Lower leg skin (tissue), 4 donors: ENCODE measurements at regions of chr6 and their contacts with region 1.

Region 1: DNA sequence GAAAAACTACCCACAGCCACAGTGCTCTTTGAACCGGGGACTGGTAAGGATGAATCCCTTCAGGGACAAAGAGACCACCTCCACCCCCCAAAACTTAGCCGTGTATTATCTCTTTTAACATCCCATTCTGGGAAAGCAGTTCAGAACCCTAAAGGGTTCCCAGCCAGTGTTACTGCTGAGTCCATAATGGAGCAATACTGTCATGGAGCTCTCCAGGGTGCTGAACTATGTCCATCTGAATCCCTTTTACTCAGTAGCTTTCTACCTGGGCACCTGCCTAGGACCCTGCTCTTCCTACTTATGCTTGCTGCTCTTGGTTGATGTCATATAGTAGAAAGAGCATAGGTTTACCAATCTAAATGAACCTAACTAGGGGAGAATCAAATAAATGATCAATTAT is 22.3 kb upstream of the SAYSD1 start:
- DNase-seq: no peak
- H3K4me3 ChIP-seq: no peak overlapping the region
- CTCF ChIP-seq: no peak
- POLR2A ChIP-seq: no peak

Region 2: DNA sequence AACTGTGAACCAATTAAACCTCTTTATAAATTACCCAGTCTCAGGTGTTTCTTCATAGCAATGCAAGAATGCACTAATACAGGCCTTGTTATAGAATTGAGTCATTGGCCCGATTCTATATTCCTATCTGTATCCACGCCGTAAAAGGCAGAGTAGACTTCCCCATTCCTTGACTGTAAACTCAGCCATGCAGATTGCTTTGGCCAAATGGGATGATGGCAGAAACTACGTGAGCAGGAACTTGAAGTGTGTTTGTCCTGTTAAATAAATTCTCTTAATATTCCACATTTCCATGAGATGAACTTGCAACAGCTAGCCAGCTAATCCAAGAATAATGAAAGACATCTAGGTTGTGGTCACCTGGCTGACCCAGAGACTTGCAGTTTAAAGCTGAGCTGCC is 18.3 kb before region 1 on chr6:
- intact Hi-C with region 1: loop called (anchors 1 kb)
- DNase-seq: no peak
- H3K4me3 ChIP-seq: no peak overlapping the region
- CTCF ChIP-seq: no peak
- POLR2A ChIP-seq: no peak